ENCODE measurements at regions of chr1 and their contacts with region 1.

Region 1: DNA sequence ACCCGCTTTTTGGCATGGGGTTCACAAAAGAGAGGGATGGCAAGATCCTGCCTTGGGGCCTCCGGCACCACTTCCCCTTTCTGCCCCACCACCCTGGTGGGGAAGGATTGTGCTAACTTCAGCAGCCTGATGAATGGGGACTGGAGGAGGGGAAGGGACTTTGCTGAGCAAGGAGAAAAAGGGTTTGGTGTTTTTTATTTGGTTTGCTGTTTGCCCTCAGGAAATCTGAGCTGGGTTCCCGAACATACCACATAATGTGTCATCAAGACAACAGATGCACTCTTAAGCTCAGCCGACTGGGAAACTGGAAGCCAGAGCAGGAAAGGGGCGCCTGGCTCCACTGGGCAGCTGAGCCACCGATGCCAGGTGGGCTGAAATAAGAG is 19.9 kb downstream of the OLFML2B start:
- DNase-seq: peak; percentile 24 to 60
- H3K4me3 ChIP-seq: no peak overlapping the region
- H3K27ac ChIP-seq: no peak overlapping the region
- H3K4me1 ChIP-seq: peaks cover 20% of the 10 kb centered on the region
- H3K27me3 ChIP-seq: no peaks in the 10 kb centered on the region; the same call in 1 of the 2 replicates
- CTCF ChIP-seq: no peak

Region 2: GRCh38 chr1:161836018-161836417 is 167.8 kb before region 1 on chr1:
- CTCF ChIA-PET with region 1: no interaction called
- POLR2A ChIA-PET with region 1: no interaction called
- intact Hi-C with region 1: no loop called
- DNase-seq: no peak
- H3K4me3 ChIP-seq: no peak overlapping the region
- H3K27ac ChIP-seq: no peak overlapping the region
- H3K4me1 ChIP-seq: no peaks in the 10 kb centered on the region
- H3K27me3 ChIP-seq: no peaks in the 10 kb centered on the region
- CTCF ChIP-seq: no peak

Region 3: GRCh38 chr1:162090378-162090777 is 86.6 kb after region 1 on chr1:
- CTCF ChIA-PET with region 1: no interaction called
- POLR2A ChIA-PET with region 1: interaction called, 14 read pairs
- intact Hi-C with region 1: no loop called
- DNase-seq: no peak
- H3K4me3 ChIP-seq: peak overlapping the region; percentile 17; the same call in 1 of the 2 replicates
- H3K27ac ChIP-seq: 0 out of 2 replicates have a peak overlapping the region, but pooled peaks have one; percentile 62
- H3K4me1 ChIP-seq: peaks cover 85% of the 10 kb centered on the region
- H3K27me3 ChIP-seq: no peaks in the 10 kb centered on the region
- CTCF ChIP-seq: no peak

Measured in PC-9 (cell line).